ENCODE measurements at regions of chr20 and their contacts with region 1.

Region 1: GRCh38 chr20:53869466-53870258 is 200.7 kb downstream of the BCAS1 start:
- DNase-seq: peak; percentile 84
- ATAC-seq: peak; percentile 75
- H3K4me3 ChIP-seq: peak overlapping the region in 1 of 2 experiments; percentile 3; a peak in 1 of 4 replicates
- H3K27ac ChIP-seq: peak overlapping the region; percentile 100
- H3K4me1 ChIP-seq: peaks cover 82% of the 10 kb centered on the region
- H3K27me3 ChIP-seq: no peaks in the 10 kb centered on the region
- CTCF ChIP-seq: peak; percentile 86

Region 2: DNA sequence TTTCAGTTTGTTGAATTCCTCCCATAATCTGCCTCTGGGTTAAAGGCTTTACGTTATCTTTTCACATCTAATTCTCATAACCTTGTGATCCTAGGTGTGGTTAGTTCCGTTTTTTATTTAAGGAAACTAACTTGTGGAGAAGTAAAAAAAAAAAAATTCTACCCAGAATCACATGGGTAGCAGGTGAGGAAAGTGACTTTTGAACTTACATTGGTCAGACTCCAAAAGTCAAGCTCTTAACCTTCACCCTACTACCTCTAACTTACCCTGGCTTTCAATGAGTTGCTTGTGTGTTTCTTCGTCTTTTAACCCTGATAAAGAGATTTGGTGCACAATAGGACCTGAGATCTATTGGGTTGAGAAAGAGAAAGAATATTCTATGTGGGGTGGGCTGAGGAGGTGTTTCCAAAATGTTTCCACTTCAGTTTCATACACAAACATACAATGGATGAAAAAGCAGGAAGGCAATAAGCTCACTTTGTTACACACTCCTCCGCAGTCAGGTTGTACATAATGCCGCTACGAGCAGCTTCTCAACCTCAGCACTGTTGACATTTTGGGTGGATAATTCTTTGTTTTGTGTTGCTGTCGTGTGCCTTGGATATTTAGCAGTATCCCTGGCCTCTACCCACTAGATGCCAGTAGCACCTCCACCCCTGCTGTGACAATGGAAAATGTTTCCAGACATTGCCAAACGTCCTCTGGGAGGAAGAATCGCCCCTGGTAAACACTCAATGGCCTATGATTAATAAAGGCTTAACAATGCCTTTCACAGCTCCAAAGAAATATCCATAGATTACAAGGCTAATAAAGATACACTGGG is 83.0 kb before region 1 on chr20:
- CTCF ChIA-PET with region 1: no interaction called
- POLR2A ChIA-PET with region 1: interaction called, 8 read pairs
- in situ Hi-C with region 1: no loop called
- intact Hi-C with region 1: loop called (anchors 5 kb)
- DNase-seq: no peak
- ATAC-seq: peak; percentile 72
- H3K4me3 ChIP-seq: peak overlapping the region in 1 of 2 experiments; percentile 5; a peak in 2 of 4 replicates
- H3K27ac ChIP-seq: peak overlapping the region; percentile 100
- H3K4me1 ChIP-seq: peaks cover 59% of the 10 kb centered on the region
- H3K27me3 ChIP-seq: no peaks in the 10 kb centered on the region
- CTCF ChIP-seq: no peak

Region 3: DNA sequence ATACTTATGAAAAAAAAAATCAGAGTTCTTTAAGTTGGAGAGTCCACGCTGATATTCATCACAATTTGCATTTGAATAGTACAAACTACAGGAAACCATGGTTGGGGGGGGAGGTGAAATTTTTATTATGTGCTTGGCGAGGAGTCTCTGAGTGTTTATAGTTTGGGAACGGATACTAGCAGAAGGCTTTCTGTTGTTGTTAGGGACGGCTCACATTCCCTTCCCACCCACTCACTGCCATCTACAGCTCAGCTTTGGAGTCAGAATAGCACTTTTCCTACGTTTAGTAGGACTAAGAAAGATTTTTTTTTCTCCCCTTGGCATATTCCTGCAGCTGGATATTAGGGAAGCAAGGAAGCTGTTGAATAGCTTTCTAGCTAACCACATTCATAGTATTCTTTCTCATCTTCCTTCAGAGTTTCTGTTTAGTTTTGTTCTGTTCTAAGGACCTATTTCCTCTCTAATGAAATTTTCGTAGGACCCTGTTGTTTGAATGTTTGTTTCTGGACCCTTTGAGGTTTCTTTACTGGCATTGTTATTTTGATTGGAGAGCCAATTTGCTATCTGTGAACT is 40.9 kb before region 1 on chr20:
- CTCF ChIA-PET with region 1: interaction called, 5 read pairs
- POLR2A ChIA-PET with region 1: interaction called, 9 read pairs
- in situ Hi-C with region 1: no loop called
- intact Hi-C with region 1: loop called (anchors 5 kb)
- DNase-seq: peak; percentile 67
- ATAC-seq: peak; percentile 89
- H3K4me3 ChIP-seq: peak overlapping the region; percentile 7 to 21
- H3K27ac ChIP-seq: peak overlapping the region; percentile 100
- H3K4me1 ChIP-seq: peaks cover 50% of the 10 kb centered on the region
- H3K27me3 ChIP-seq: no peaks in the 10 kb centered on the region
- CTCF ChIP-seq: no peak